ENCODE measurements at regions of chr11 and their contacts with region 1.

Region 1: DNA sequence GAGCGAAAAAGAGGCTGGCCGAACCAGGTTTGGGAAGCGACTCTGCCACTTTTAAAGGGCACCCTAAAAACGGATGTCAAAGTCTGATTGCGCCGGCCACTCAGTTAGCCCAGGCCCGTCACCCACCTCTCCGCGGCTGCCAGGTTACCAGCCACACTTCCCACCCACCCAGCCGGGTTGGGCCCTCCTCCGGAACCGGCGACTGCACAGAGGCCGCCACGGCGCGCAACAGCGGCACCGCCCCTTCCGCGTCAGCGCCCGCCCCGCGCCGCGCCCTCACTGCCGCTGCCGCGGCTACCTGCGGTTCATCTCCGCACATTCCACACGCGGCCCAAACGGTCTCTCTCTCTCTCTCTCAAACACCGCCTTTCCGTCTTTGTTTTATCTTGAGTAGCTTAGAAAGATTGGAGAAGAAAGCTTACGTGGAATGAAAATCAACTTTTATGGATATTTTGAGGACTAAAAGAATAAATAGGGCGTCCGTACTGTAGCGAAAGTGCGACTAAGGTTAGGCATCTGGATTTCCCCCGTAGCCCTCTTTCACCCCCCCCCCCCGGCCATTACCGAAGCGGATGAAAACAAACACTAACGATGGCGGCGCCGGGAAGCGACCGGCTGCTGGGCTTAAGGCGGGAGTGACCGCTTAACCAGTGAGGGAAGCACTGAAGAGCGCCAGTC is at the starts of genes ATG13 and HARBI1:
- DNase-seq: peak; percentile 76 to 97 (median 92)

Region 2: DNA sequence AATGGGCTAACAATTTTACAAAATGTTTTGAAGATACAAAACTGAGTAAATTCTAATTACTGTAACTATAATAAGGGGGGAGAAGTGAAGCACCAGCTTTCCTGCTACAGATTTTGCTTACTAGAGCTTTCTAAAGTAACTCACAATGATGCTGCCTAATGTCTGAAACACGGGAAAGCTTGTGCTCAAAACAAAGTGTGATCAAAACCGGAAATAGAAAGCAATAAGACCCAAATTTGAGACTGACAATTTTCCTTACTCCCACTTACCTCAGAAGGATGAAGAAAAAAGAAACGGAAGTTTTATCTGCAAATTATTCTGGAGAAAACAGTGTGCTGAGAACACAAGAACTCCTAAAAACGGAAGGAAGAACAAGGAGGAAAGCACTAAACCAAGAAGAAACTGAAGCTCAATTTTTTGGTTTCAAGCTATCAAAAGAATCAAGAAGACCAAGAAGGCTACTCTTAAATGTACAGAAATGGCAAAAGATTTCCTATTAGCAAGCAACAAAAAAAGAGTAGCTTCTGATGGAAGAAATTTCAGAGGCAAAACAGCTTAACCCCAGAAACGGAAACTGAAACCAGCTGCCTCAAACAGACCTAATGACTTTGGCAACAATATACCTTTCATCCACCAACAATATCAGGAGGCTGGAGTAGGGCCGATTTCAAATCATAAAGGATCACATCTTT is 56.7 kb before region 1 on chr11:
- intact Hi-C with region 1: no loop called
- DNase-seq: peak in 2 of 42 donors; percentile 12 to 43

Region 3: DNA sequence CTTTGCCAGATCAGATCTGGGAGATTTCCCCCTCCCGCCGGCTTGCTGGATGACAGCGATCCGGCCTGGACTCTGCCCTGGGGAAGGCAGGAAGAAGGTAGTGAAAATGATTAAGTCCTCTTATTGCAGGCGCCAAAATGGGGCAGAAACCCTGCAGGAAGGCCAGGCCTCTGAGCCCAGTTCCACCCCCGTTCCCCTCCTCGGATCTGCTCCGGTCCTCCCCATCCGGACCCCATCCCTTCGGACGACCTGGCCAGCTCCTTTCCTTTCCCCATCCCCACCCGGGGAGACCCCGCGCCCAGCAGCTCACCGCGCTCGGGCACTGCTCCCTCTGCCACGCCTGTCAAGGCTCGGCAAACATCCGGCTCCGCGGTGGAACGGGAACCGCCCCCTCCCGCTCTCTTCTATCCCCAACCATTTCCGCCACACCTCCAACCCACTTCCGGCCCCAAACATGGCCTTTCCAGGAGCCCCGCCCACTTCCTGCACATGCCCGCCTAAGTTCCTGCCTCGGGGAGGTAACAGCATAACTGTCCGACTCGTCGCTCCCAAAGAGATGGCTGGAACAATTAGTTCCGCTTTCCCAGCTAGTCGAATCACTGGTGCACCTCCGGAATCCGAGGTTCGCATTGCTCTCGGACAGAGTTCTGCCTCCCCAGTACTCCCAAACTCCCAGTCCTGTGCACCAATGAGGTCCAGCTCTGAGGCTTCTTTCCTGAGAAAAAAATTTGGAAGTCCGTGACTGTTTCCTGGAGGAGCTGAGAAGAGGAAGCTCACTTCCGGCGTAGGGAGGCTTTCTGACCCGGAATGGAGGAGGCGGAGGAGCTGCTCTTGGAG is 83.3 kb after region 1 on chr11 and contains the starts of genes ARHGAP1 and ZNF408:
- intact Hi-C with region 1: loop called (anchors 5 kb)
- DNase-seq: peak; percentile 98 to 100 (median 99)

Measured in head of caudate nucleus (tissue), 42 donors.